Natural killer cell (primary cell): ENCODE measurements at regions of chr17 and their contacts with region 1.

Region 1: GRCh38 chr17:6651357-6651918 is at the starts of genes C17orf100 and MED31:
- DNase-seq: peak; percentile 89 to 97
- ATAC-seq: peak; percentile 88 to 98 (median 92)
- H3K4me3 ChIP-seq: peak within 1 kb of the TSS; percentile 61
- H3K4me3 Mint-ChIP-seq: peak within 1 kb of the TSS; percentile 96
- H3K27ac ChIP-seq: peak within 1 kb of the TSS; percentile 91
- H3K27ac Mint-ChIP-seq: peak within 1 kb of the TSS; percentile 95 to 96
- H3K4me1 ChIP-seq: peaks cover 25% of the 10 kb centered on the region
- H3K4me1 Mint-ChIP-seq: peaks cover 41 to 47% of the 10 kb centered on the region in 2 donors
- H3K27me3 ChIP-seq: peaks cover 13% of the 10 kb centered on the region
- H3K27me3 Mint-ChIP-seq: peaks cover 13 to 24% of the 10 kb centered on the region in 2 donors
- CTCF ChIP-seq: no peak
- total RNA-seq, gene C17orf100: 0.68 to 0.87 (median 0.82) TPM
- total RNA-seq, gene MED31: 8.3 to 26.1 (median 19.1) TPM

Region 2: GRCh38 chr17:6640536-6641373 is 10.7 kb before region 1 on chr17 and contains the starts of genes KIAA0753 and TXNDC17:
- intact Hi-C with region 1: loop called (anchors 1 kb)
- DNase-seq: peak; percentile 91 to 94
- ATAC-seq: peak; percentile 93 to 97 (median 94)
- H3K4me3 ChIP-seq: peak within 1 kb of the TSS; percentile 83
- H3K4me3 Mint-ChIP-seq: peak within 1 kb of the TSS; percentile 91
- H3K27ac ChIP-seq: peak within 1 kb of the TSS; percentile 78
- H3K27ac Mint-ChIP-seq: peak within 1 kb of the TSS; percentile 93 to 94
- H3K4me1 ChIP-seq: peaks cover 29% of the 10 kb centered on the region
- H3K4me1 Mint-ChIP-seq: peaks cover 48 to 55% of the 10 kb centered on the region in 2 donors
- H3K27me3 ChIP-seq: no peaks in the 10 kb centered on the region
- H3K27me3 Mint-ChIP-seq: no peaks in the 10 kb centered on the region
- CTCF ChIP-seq: no peak
- total RNA-seq, gene KIAA0753: 13.4 to 17.2 (median 15.4) TPM
- total RNA-seq, gene TXNDC17: 15.2 to 15.7 (median 15.4) TPM

Region 3: DNA sequence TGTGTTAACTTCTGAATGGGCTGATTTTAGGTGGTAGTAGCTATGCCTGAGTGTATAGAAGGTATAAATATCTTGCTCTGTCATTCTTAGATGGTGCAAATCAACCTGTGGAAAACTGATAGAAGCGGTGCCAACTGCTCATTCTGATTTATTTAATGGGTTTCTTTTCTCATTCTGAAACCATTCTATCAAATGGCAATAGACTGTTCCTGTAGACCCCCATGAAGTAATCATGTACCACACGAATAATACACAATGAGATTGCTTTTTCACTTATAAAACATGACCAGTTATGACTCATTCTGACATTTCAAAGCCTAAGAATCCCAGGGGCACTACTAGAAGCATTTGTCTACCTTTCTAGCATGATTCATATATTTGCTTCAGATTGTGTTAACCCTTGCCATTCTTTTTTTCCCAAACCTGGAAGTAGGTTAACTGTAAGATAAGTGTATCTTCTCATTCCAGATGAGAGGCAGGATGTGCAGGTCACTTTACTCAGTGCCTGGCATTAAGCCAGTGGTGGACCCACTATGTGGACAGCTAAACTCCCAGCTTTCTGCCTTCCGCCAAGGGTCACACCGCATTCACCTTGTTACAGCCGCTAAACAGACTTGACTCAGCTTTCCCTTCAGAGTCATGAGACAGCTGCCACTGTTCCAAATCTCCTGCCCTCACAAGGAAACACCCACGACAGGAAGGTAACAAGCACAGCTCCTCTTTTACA is 408.9 kb after region 1 on chr17:
- intact Hi-C with region 1: no loop called
- DNase-seq: no peak
- ATAC-seq: no peak
- H3K4me3 ChIP-seq: no peak overlapping the region
- H3K4me3 Mint-ChIP-seq: no peak overlapping the region
- H3K27ac ChIP-seq: no peak overlapping the region
- H3K27ac Mint-ChIP-seq: no peak overlapping the region
- H3K4me1 ChIP-seq: no peaks in the 10 kb centered on the region
- H3K4me1 Mint-ChIP-seq: peaks cover 0 to 3% of the 10 kb centered on the region in 2 donors
- H3K27me3 ChIP-seq: no peaks in the 10 kb centered on the region
- H3K27me3 Mint-ChIP-seq: peaks cover 8 to 11% of the 10 kb centered on the region in 2 donors
- CTCF ChIP-seq: no peak